MCF 10A (cell line): ENCODE measurements at regions of chr16 and their contacts with region 1.

Region 1: DNA sequence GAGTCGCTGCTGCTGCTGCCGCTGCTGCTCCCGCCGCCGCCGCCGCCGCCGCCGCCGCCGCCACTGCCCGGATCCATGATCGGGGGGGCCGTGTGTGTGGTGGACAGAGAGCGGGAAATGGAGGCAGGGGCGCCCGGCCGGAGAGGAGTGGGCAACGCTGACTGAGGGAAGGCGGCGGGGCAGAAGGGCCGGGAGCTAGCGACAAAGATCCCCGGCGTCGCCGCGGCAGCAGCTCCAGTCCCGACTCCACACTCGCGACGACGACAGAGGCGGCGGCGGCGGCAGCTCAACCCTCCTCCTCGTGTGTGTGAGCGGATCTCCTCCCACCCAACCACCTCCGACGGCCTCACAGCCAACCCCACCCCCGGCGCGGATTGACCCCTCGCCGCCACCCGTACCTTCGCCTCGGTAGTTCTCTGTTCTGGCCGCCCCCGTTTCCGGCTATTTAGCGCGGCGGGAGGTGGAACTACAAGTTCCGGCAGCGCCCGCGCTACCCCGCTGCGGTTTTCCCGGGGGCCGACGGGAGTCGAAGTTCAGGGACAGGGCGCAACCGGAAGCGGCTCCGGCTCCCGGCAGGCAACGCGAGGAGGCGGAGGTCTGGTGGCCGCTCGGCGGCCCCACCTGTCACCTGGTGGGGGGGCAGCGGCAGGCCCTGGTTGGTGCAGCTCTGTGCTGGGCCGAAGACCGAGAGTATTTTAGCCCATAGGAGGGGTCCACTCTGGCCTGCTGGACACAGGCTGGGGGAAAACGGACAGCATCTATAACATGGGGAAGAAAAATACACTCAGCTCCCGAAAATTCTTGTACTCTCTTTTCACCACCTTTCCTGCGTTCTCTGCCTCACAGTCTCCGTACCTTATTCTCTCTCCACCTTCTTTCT is at the start of gene GSPT1:
- DNase-seq: peak; percentile 98
- H3K4me3 Mint-ChIP-seq: peak within 1 kb of the TSS; percentile 88
- H3K27ac Mint-ChIP-seq: peak within 1 kb of the TSS; percentile 71
- H3K4me1 Mint-ChIP-seq: peaks cover 15% of the 10 kb centered on the region
- H3K27me3 Mint-ChIP-seq: no peaks in the 10 kb centered on the region
- CTCF ChIP-seq: no peak
- total RNA-seq, gene GSPT1: 163 and 199 TPM in 2 replicates

Region 2: DNA sequence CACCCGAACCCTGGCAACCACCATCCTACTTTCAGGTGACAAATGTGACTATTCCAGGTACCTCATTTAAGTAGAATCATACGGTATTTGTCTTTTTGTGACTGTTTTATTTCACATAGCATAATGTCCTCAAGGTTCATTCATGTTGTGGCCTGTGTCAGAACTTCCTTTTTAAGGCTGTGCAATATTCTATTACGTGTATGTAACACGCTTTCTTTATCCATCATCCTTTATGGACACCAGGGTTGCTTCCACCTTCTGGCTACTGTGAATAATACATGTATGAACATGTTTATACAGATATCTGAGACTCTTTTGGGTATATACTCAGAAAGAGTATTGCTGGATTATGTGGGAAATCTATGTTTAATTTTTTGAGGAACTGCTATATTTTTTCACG is 35.9 kb before region 1 on chr16:
- CTCF ChIA-PET with region 1: no interaction called
- POLR2A ChIA-PET with region 1: no interaction called
- intact Hi-C with region 1: no loop called
- DNase-seq: peak; percentile 16
- H3K4me3 Mint-ChIP-seq: no peak overlapping the region
- H3K27ac Mint-ChIP-seq: peak overlapping the region; percentile 36
- H3K4me1 Mint-ChIP-seq: peaks cover 14% of the 10 kb centered on the region
- H3K27me3 Mint-ChIP-seq: no peaks in the 10 kb centered on the region
- CTCF ChIP-seq: no peak

Region 3: DNA sequence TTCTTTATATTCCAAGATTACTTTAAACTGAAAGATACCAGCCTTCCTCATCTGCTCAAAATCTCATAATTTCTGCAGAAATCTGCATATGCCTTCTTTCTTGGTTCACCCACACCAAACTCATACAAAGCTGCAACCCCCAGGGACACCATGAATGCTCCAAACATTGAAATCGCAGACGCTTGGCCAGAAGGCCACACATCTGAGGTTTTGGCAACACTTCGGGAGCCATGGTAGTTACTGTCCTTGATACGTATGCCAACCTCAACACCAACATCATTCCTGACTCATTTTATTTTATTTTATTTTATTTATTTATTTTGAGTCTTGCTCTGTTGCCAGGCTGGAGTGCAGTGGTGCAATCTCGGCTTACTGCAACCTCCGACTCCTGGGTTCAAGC is 12.0 kb before region 1 on chr16:
- CTCF ChIA-PET with region 1: interaction called, 3 read pairs
- POLR2A ChIA-PET with region 1: interaction called, 10 read pairs
- intact Hi-C with region 1: no loop called
- DNase-seq: peak; percentile 16
- H3K4me3 Mint-ChIP-seq: no peak overlapping the region
- H3K27ac Mint-ChIP-seq: no peak overlapping the region
- H3K4me1 Mint-ChIP-seq: peaks cover 12% of the 10 kb centered on the region
- H3K27me3 Mint-ChIP-seq: no peaks in the 10 kb centered on the region
- CTCF ChIP-seq: no peak